Activated B cell treated with CpG ODN at 0.5 μM for 24 hours (primary cell): ENCODE measurements at regions of chr22 and their contacts with region 1.

Region 1: GRCh38 chr22:31290494-31291471 is 1.5 kb downstream of the PIK3IP1 start:
- DNase-seq: peak; percentile 89
- ATAC-seq: peak; percentile 86
- H3K4me3 Mint-ChIP-seq: peak overlapping the region; percentile 92
- H3K27ac Mint-ChIP-seq: peak overlapping the region; percentile 100
- H3K4me1 Mint-ChIP-seq: peaks cover 80% of the 10 kb centered on the region
- H3K27me3 Mint-ChIP-seq: no peaks in the 10 kb centered on the region
- CTCF ChIP-seq: no peak

Region 2: GRCh38 chr22:30591588-30592359 is 699.0 kb before region 1 on chr22 and contains the start of gene PES1:
- CTCF ChIA-PET with region 1: no interaction called
- POLR2A ChIA-PET with region 1: no interaction called
- intact Hi-C with region 1: loop called (anchors 1 kb)
- DNase-seq: peak; percentile 87
- ATAC-seq: peak; percentile 95
- H3K4me3 Mint-ChIP-seq: no peak within 1 kb of the TSS
- H3K27ac Mint-ChIP-seq: no peak within 1 kb of the TSS
- H3K4me1 Mint-ChIP-seq: no peaks in the 10 kb centered on the region
- H3K27me3 Mint-ChIP-seq: peaks cover 1% of the 10 kb centered on the region
- CTCF ChIP-seq: no peak
- total RNA-seq, gene PES1: 124 TPM in 2 replicates

Region 3: GRCh38 chr22:31107178-31107893 is 183.4 kb before region 1 on chr22 and contains the start of gene SELENOM:
- CTCF ChIA-PET with region 1: no interaction called
- POLR2A ChIA-PET with region 1: interaction called, 4 read pairs
- intact Hi-C with region 1: loop called (anchors 1 kb)
- DNase-seq: peak; percentile 76
- ATAC-seq: peak; percentile 97
- H3K4me3 Mint-ChIP-seq: peak within 1 kb of the TSS; percentile 93
- H3K27ac Mint-ChIP-seq: peak within 1 kb of the TSS; percentile 80
- H3K4me1 Mint-ChIP-seq: peaks cover 23% of the 10 kb centered on the region
- H3K27me3 Mint-ChIP-seq: no peaks in the 10 kb centered on the region
- CTCF ChIP-seq: no peak
- total RNA-seq, gene SELENOM: 9.0 and 9.5 TPM in 2 replicates

Region 4: GRCh38 chr22:31278622-31279326 is 12.0 kb before region 1 on chr22:
- CTCF ChIA-PET with region 1: interaction called, 12 read pairs
- POLR2A ChIA-PET with region 1: interaction called, 16 read pairs
- intact Hi-C with region 1: loop called (anchors 2 kb)
- DNase-seq: no peak
- ATAC-seq: no peak
- H3K4me3 Mint-ChIP-seq: no peak overlapping the region
- H3K27ac Mint-ChIP-seq: peak overlapping the region; percentile 13
- H3K4me1 Mint-ChIP-seq: no peaks in the 10 kb centered on the region
- H3K27me3 Mint-ChIP-seq: no peaks in the 10 kb centered on the region
- CTCF ChIP-seq: no peak

Region 5: DNA sequence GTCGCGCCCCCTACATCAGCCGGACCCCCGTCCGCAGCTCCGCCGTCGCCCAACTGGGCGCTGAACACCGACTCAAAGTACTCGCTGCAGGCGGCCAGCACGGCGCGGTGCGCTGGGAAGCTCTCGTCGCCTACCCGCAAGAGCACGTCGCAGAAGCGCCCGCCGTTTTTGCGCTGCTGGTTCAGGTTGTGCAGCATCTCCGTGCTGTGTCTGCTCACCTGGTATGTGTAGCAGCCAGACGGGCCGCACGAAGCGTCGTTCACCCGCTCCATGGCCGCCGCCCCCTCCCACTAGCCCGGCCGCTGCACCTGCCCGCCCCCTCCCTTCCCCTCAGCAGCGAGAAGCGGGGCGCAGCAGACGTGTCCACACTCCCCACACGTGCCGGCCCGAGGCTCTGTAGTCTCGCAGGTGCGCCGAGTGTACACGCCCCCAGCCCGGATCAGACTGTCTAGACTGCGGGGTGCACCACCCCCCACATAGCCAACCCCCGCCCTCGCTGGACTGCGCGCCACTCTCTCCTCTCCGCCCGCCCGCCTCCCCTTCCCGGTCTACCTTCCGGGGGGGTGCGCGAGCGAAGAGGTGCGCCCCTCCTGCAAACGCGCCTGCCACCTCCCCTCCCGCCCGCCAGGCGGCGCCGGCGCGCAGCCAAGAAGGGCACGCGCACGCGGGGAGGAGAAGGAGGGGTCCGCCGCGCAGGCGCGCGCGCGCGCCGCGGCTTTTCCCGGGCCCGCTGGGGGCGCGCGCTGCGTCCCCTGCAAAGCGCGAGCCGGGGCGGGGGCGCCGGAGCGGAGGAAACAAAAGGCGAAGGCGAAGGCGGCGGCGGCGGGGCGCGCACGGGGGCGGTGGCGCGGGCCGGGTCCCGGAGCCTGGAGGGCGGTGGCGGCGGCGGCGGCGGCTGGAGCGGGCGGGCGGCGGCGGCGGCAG is 54.8 kb after region 1 on chr22:
- CTCF ChIA-PET with region 1: interaction called, 3 read pairs
- POLR2A ChIA-PET with region 1: interaction called, 68 read pairs
- intact Hi-C with region 1: loop called (anchors 1 kb)
- DNase-seq: peak; percentile 89
- ATAC-seq: peak; percentile 58
- H3K4me3 Mint-ChIP-seq: peak overlapping the region; percentile 83
- H3K27ac Mint-ChIP-seq: peak overlapping the region; percentile 80
- H3K4me1 Mint-ChIP-seq: peaks cover 50% of the 10 kb centered on the region
- H3K27me3 Mint-ChIP-seq: no peaks in the 10 kb centered on the region
- CTCF ChIP-seq: peak; percentile 56

Region 6: GRCh38 chr22:31496007-31496734 is 205.4 kb after region 1 on chr22 and contains the start of gene SFI1:
- CTCF ChIA-PET with region 1: no interaction called
- POLR2A ChIA-PET with region 1: interaction called, 7 read pairs
- intact Hi-C with region 1: loop called (anchors 2 kb)
- DNase-seq: peak; percentile 96
- ATAC-seq: peak; percentile 83
- H3K4me3 Mint-ChIP-seq: peak within 1 kb of the TSS; percentile 95
- H3K27ac Mint-ChIP-seq: peak within 1 kb of the TSS; percentile 97
- H3K4me1 Mint-ChIP-seq: peaks cover 42% of the 10 kb centered on the region
- H3K27me3 Mint-ChIP-seq: no peaks in the 10 kb centered on the region
- CTCF ChIP-seq: no peak
- total RNA-seq, gene SFI1: 110 and 126 TPM in 2 replicates